Activated T-helper 2 cell treated with anti-CD3 and anti-CD28 coated beads, Interferon-gamma antibody, Interleukin-2, Interleukin-4, amounts not matched to agents 10 μg/mL and 5 μg/mL and 100 μg/mL, durations not matched to agents 14 hours and 24 hours and 36 hours (primary cell): ENCODE measurements at regions of chr12 and their contacts with region 1.

Region 1: GRCh38 chr12:52980693-52981423 is 25.4 kb upstream of the EIF4B start:
- DNase-seq: peak; percentile 69
- H3K4me3 Mint-ChIP-seq: no peak overlapping the region
- H3K27ac Mint-ChIP-seq: no peak overlapping the region
- H3K4me1 Mint-ChIP-seq: no peaks in the 10 kb centered on the region
- H3K27me3 Mint-ChIP-seq: peaks cover 29% of the 10 kb centered on the region

Region 2: DNA sequence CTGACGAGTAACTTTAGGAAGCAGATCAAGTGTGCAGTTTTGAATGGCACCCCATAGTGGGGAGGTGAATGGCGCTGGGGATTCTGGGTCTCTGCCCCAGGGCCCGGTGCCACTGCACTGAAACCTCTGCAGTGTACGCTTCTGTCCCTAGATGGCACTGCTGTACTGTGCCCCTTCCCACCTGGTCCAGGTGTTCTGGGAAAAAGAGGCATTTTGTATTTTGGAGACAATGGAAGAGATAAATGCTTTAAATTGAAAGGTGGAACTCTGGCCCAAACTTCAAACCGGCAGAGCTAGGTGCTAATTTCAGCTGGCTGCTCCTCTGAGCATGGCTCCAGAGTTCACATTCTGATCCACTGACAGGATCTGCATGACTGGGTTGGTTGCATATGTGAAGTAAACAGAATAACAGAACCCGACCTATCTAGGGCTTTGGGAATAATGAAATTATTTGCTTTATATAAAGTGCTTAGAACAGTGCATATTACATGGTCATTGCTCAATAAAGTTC is 841.3 kb before region 1 on chr12:
- intact Hi-C with region 1: loop called (anchors 10 kb)
- DNase-seq: peak; percentile 18
- H3K4me3 Mint-ChIP-seq: no peak overlapping the region
- H3K27ac Mint-ChIP-seq: no peak overlapping the region
- H3K4me1 Mint-ChIP-seq: peaks cover 3% of the 10 kb centered on the region
- H3K27me3 Mint-ChIP-seq: peaks cover 7% of the 10 kb centered on the region

Region 3: DNA sequence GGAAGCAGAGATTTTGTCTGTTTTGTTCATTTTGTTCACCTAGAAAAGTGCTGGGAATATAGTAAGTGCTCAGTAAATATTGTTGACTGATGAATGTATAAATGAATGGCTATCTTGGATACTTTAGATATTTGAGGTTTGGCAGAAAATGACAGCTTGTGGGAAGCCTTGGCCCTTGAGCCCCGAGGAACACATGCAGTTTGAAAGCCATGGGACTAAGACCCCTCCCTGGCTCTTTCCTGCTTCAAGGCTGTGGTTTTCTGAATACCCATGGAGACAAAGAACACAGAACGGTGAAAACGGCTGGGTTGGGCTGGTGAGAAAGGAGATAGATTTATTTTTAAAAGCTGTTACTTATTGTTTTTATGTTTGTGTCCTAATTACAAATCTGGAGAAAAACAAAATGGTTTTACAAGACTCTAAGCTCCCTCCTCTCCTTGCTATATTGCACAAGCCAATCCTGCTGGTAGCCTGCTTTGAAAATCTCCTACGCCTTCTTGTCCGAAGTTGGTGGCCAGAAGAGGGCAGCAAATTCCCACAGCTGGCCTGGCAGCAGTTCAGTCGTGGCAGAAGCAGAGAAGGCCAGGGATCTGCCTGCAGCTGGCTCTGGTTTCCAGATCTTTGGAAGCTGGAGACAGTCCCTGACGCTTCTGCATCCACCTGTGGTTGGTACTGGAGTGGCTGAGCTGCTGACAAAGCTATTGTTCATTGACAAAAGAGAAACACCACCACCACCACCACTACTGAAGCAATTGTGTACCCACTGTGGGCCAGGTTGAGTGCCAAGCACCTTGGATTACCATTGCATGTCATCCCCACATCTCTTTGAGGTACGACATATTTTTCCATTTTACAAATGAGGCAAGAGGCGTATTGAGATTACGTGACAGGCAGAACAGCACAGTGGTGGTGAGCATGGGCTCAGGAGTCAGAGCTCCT is 608.4 kb before region 1 on chr12:
- intact Hi-C with region 1: loop called (anchors 5 kb)
- DNase-seq: peak; percentile 24
- H3K4me3 Mint-ChIP-seq: no peak overlapping the region
- H3K27ac Mint-ChIP-seq: no peak overlapping the region
- H3K4me1 Mint-ChIP-seq: no peaks in the 10 kb centered on the region
- H3K27me3 Mint-ChIP-seq: peaks cover 11% of the 10 kb centered on the region

Region 4: GRCh38 chr12:52582971-52583456 is 397.8 kb before region 1 on chr12:
- intact Hi-C with region 1: loop called (anchors 1 kb)
- DNase-seq: peak; percentile 52
- H3K4me3 Mint-ChIP-seq: no peak overlapping the region
- H3K27ac Mint-ChIP-seq: no peak overlapping the region
- H3K4me1 Mint-ChIP-seq: peaks cover 32% of the 10 kb centered on the region
- H3K27me3 Mint-ChIP-seq: peaks cover 13% of the 10 kb centered on the region

Region 5: DNA sequence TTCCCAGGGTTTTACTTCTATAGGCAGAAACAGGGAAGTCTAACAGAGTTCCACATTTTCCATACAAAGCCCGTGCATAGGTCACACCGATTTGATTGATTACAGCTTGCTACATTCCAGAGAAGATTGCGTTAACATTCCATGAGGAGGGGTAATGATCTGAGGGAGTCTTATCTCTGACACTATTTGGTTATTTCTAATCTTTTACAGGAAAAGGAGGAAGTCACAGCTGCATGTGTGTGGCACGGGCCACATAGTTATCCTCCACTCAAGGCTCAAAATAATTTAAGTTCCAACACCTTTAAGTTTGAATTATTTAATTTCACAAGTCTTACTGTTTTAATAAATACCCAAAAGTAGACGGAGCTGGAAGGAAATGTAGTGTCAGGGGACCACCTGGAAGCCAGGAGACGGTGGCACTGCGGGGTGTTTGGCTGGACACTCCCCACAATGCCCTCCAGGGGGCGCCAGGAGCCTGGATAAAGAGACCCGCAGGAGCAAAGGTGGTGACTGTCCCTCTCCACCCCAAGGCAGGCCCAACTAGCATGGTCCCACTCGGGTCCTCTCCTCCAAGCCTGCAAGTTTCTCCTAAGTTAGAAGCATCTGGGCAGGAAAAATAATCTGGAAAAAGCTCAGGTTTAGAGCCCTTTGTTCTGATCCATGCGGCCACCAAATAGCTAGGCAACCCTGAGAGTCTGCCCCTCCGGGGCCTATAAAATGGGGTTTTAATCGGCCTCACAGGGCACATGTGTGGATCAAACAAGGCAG is 96.1 kb before region 1 on chr12:
- intact Hi-C with region 1: loop called (anchors 1 kb)
- DNase-seq: peak; percentile 62
- H3K4me3 Mint-ChIP-seq: no peak overlapping the region
- H3K27ac Mint-ChIP-seq: no peak overlapping the region
- H3K4me1 Mint-ChIP-seq: peaks cover 6% of the 10 kb centered on the region
- H3K27me3 Mint-ChIP-seq: peaks cover 8% of the 10 kb centered on the region

Region 6: DNA sequence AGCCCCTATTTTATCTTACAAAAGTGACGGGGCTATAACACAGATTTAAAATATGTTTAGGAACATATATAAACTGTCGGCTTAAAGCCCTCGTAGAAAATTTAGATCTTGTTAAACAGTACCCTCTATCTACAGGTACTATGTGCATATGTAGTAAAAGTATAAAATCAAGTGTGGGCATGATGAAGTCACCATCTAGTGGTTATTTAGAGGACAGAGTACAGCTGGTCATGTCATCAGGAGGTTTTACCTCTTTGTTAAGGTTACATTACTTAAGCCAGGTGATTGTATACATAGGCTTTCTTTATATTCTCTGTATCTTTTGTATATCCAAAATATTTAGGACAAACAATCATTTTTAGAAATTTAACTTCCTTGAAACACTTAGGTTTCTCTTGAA is 50.8 kb after region 1 on chr12:
- intact Hi-C with region 1: no loop called
- DNase-seq: no peak
- H3K4me3 Mint-ChIP-seq: no peak overlapping the region
- H3K27ac Mint-ChIP-seq: no peak overlapping the region
- H3K4me1 Mint-ChIP-seq: no peaks in the 10 kb centered on the region
- H3K27me3 Mint-ChIP-seq: no peaks in the 10 kb centered on the region